ENCODE measurements at regions of chr2 and their contacts with region 1.

Region 1: GRCh38 chr2:230160112-230160660 is 59.6 kb downstream of the SP110 start:
- DNase-seq: no peak
- H3K4me3 ChIP-seq: no peak overlapping the region
- H3K27ac ChIP-seq: no peak overlapping the region
- H3K4me1 ChIP-seq: no peaks in the 10 kb centered on the region
- H3K27me3 ChIP-seq: no peaks in the 10 kb centered on the region
- CTCF ChIP-seq: peak; percentile 34 to 67 (median 56)
- EP300 ChIP-seq: no peak
- POLR2A ChIP-seq: no peak

Region 2: DNA sequence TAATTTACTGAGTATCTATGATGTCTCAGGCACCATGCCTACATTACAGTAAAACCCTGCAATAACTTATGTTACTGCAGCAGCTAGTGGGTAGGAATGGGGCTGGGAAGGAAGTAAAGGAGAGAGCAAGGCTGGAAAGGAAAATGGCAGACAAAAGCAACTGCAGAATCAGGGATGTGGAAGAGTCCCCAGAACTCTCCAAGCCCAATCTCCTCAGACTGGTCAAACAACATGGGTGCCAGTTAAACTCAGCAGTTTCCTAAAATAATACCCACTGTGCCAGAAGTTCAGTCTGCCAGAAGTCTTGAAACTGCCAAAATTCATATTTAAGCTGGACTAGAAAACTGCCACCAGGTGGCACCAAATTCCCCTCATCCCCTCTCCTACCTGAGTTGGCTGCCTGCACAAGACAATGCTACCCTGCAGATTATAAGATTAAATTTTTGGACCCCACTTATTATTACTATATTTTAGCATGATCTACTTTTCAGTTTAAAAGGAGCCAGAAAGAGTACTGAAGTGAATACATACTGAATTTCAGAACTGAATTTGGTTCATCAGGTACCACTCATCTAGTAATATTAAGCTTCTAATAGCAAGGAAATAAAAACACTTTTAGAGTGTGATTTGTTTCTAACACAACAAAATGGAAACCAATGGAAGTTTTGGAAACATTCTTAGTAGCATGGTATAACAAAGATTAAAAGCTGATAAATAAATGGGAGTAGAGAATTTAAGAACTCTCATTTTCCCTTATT is 359.0 kb before region 1 on chr2:
- intact Hi-C with region 1: loop called (anchors 10 kb)
- DNase-seq: no peak
- H3K4me3 ChIP-seq: no peak overlapping the region
- H3K27ac ChIP-seq: peak overlapping the region in 1 of 4 donors; percentile 27
- H3K4me1 ChIP-seq: peaks cover 0 to 13% (median 2%) of the 10 kb centered on the region in 4 donors
- H3K27me3 ChIP-seq: no peaks in the 10 kb centered on the region
- CTCF ChIP-seq: peak in 3 of 4 experiments; percentile 44 to 68 (median 54)
- EP300 ChIP-seq: no peak
- POLR2A ChIP-seq: no peak

Region 3: DNA sequence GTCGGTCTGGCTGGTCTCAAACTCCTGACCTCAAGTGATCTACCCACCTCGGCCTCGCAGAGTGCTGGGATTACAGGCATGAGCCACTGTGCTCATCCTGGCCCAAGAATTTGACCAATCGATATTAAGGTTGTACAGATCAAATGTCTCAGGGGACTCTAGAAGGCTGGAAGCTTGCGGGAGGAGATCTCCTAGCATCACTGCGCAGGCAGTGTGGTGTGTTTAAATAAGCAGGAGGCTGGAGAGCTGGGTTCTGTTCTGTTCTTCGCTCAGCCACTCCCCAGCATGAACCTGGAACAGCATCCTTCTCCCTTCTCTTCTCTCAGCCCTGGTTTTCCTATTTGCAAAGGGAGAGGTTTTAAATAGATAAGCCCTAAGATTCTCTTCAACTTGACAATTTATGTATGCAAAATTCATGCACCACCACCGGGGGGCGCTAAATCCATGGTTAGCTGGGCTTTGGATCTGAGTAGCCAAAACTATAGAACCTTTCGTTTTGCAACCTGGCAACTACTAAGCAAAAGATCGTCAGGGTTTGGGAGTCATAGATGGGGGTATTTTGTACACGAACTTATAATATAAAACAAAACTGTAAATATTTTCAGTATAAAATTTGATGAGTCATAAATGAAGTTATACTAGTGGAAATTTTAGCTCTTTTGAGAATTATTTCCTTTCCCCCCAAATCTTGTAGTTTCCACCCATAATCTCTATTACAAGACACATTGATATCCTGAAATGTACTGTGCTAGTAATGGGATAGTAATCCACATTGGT is 152.1 kb before region 1 on chr2:
- intact Hi-C with region 1: loop called (anchors 2 kb)
- DNase-seq: peak; percentile 82
- H3K4me3 ChIP-seq: no peak overlapping the region
- H3K27ac ChIP-seq: no peak overlapping the region
- H3K4me1 ChIP-seq: peaks cover 0 to 22% (median 14%) of the 10 kb centered on the region in 4 donors
- H3K27me3 ChIP-seq: no peaks in the 10 kb centered on the region
- CTCF ChIP-seq: peak; percentile 30 to 81 (median 68)
- EP300 ChIP-seq: no peak
- POLR2A ChIP-seq: no peak

Region 4: DNA sequence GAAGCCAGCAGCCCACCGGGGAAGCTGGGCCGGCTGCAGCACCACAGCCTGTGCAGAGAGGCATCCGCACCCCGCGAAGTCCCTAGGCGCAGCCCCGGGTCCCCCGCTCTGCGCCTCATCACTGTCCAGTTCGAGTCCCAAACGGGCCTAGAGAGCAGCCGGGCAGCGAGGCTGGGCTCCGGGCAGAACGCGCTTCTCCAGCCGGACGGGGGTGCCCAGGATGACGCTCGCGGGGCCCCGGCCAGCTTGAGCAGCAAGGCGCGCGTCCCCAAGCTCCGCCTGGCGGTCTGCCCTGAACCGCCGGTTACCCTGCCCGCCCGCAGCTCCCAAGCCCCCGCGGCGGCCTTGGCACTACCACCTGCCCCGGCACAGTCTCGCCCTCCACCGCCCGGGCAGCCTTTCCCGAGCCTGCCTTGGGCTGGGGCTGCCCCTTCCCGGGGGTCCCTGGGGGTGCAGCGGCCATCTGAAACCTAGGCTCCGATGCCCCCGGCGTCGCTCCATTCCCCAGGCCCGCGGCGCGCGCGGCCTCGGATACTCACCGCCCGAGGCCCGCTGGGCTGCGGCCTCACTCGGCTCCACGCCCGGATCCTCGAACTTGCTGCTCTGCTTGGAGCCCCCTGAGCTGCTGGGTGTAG is 92.1 kb before region 1 on chr2:
- intact Hi-C with region 1: loop called (anchors 5 kb)
- DNase-seq: peak; percentile 66
- H3K4me3 ChIP-seq: peak overlapping the region; percentile 39 to 68 (median 64)
- H3K27ac ChIP-seq: peak overlapping the region; percentile 63 to 72 (median 68)
- H3K4me1 ChIP-seq: peaks cover 0 to 29% (median 14%) of the 10 kb centered on the region in 4 donors
- H3K27me3 ChIP-seq: no peaks in the 10 kb centered on the region
- CTCF ChIP-seq: peak in 1 of 4 experiments; percentile 6
- EP300 ChIP-seq: no peak
- POLR2A ChIP-seq: no peak

Region 5: GRCh38 chr2:230234845-230235244 is 74.7 kb after region 1 on chr2:
- intact Hi-C with region 1: no loop called
- DNase-seq: no peak
- H3K4me3 ChIP-seq: no peak overlapping the region
- H3K27ac ChIP-seq: no peak overlapping the region
- H3K4me1 ChIP-seq: no peaks in the 10 kb centered on the region
- H3K27me3 ChIP-seq: no peaks in the 10 kb centered on the region
- CTCF ChIP-seq: no peak
- EP300 ChIP-seq: no peak
- POLR2A ChIP-seq: no peak

Measured in sigmoid colon (tissue), 7 donors.